ENCODE measurements at regions of chr7 and their contacts with region 1.

Region 1: GRCh38 chr7:36092221-36092771 is 60.8 kb upstream of the EEPD1 start:
- DNase-seq: no peak
- ATAC-seq: no peak
- H3K4me3 ChIP-seq: no peak overlapping the region
- H3K4me3 Mint-ChIP-seq: no peak overlapping the region
- H3K27ac ChIP-seq: no peak overlapping the region
- H3K27ac Mint-ChIP-seq: no peak overlapping the region
- H3K4me1 ChIP-seq: no peaks in the 10 kb centered on the region
- H3K4me1 Mint-ChIP-seq: no peaks in the 10 kb centered on the region
- H3K27me3 ChIP-seq: no peaks in the 10 kb centered on the region
- H3K27me3 Mint-ChIP-seq: no peaks in the 10 kb centered on the region
- CTCF ChIP-seq: no peak

Region 2: DNA sequence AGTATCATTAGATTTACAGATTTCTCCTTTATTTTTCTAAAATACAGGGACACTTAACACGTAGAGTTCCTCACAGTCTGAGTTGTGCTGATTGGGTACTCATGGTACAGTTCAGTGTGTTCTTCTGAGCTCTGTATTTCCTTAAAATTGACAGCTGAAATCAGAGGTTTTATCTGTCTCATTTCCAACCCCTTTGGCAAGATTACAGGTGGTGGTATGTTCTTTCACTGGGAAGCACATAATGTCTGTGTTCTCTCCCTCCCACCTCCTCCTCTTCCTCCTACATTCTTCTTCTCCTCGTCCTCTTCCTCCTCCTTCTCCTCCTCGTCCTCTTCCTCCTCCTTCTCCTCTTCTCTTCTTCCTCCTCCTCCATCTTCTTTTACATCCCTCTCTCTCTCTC is 38.7 kb before region 1 on chr7:
- CTCF ChIA-PET with region 1: no interaction called
- POLR2A ChIA-PET with region 1: no interaction called
- intact Hi-C with region 1: loop called in 1 of 2 experiments (anchors 1 kb)
- DNase-seq: no peak
- ATAC-seq: no peak
- H3K4me3 ChIP-seq: no peak overlapping the region
- H3K4me3 Mint-ChIP-seq: no peak overlapping the region
- H3K27ac ChIP-seq: no peak overlapping the region
- H3K27ac Mint-ChIP-seq: no peak overlapping the region
- H3K4me1 ChIP-seq: peaks cover 4% of the 10 kb centered on the region
- H3K4me1 Mint-ChIP-seq: no peaks in the 10 kb centered on the region
- H3K27me3 ChIP-seq: no peaks in the 10 kb centered on the region
- H3K27me3 Mint-ChIP-seq: no peaks in the 10 kb centered on the region
- CTCF ChIP-seq: no peak